ENCODE measurements at regions of chr2 and their contacts with region 1.

Region 1: GRCh38 chr2:158903711-158904443 is 64.6 kb upstream of the TANC1 start:
- DNase-seq: no peak
- H3K4me3 Mint-ChIP-seq: no peak overlapping the region
- H3K27ac Mint-ChIP-seq: no peak overlapping the region
- H3K4me1 Mint-ChIP-seq: no peaks in the 10 kb centered on the region
- H3K27me3 Mint-ChIP-seq: peaks cover 8% of the 10 kb centered on the region

Region 2: DNA sequence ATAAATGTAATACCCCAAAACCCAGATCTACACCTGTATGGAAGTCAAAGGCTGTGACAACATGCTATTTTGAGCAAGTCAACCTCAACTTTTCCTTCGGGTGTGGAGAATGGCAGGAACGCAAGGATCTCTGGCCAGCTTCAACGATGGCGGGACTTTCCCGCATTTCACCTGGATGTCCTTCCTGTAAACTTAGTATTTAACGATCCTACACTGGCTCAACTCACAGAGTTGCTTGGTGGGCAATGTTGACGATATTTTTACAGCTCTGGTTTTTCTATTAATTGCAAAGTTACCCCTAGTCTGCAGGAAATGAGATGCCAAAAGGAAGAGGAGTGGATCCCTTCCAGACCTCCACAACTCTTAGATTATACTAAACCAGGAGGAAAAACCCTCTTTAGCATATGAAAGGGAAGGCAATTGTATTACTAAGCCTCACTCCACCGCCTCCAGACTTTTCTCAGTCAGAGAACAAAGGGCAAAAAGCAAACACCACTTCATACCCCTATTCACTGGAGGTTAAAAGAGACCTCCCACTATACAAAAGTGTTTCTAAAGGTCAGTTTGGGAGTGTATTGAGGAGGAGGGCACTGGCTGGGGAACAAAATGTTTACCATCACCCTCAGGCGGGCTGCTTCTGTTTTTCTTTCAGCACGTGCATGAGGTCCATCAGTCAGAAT is 971.3 kb before region 1 on chr2:
- intact Hi-C with region 1: no loop called
- DNase-seq: no peak
- H3K4me3 Mint-ChIP-seq: no peak overlapping the region
- H3K27ac Mint-ChIP-seq: no peak overlapping the region
- H3K4me1 Mint-ChIP-seq: no peaks in the 10 kb centered on the region
- H3K27me3 Mint-ChIP-seq: no peaks in the 10 kb centered on the region

Region 3: GRCh38 chr2:158828493-158829164 is 75.2 kb before region 1 on chr2:
- intact Hi-C with region 1: no loop called
- DNase-seq: no peak
- H3K4me3 Mint-ChIP-seq: no peak overlapping the region
- H3K27ac Mint-ChIP-seq: no peak overlapping the region
- H3K4me1 Mint-ChIP-seq: no peaks in the 10 kb centered on the region
- H3K27me3 Mint-ChIP-seq: peaks cover 5% of the 10 kb centered on the region

Region 4: GRCh38 chr2:159118115-159118858 is 214.4 kb after region 1 on chr2:
- intact Hi-C with region 1: loop called (anchors 1 kb)
- DNase-seq: peak; percentile 52
- H3K4me3 Mint-ChIP-seq: no peak overlapping the region
- H3K27ac Mint-ChIP-seq: no peak overlapping the region
- H3K4me1 Mint-ChIP-seq: no peaks in the 10 kb centered on the region
- H3K27me3 Mint-ChIP-seq: peaks cover 2% of the 10 kb centered on the region

Region 5: DNA sequence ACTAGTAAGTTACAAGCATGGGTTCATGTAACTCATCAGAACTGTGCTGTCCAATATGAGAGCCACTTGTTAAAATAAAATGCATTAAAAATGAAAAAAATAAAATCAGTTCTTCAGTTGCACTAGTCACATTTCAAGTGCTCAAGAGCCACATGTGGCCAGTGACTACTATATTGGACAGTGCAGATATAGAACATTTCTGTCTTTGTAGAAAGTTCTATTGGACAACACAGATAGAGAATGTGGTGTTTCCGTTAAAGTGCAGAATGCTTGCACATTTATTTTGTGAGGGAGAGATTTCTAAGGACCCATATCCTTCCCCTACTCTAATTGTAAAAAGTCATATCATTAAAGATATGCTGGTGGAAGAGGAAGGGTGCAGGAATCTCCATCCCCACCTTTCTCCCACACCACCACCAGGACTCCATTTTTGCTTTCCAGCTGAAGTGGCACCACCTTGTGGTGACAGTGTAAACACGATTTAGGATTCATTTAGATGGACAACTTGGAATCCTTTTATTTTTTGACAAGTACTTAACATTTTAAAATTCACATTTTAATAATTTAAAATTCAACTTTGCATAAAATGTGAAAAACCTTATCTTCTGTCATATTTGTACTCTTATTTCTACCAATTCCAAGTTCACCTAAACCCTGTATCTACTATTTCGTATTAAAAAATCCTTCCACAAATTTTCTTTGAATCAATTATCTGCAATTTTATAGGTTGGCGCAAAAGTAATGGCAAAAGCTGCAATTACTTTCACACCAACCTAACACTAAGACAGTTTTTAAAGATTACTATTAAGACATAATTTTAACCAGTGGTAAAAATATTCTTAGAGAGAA is 903.5 kb after region 1 on chr2:
- intact Hi-C with region 1: loop called (anchors 1 kb)
- DNase-seq: no peak
- H3K4me3 Mint-ChIP-seq: no peak overlapping the region
- H3K27ac Mint-ChIP-seq: no peak overlapping the region
- H3K4me1 Mint-ChIP-seq: no peaks in the 10 kb centered on the region
- H3K27me3 Mint-ChIP-seq: no peaks in the 10 kb centered on the region

Region 6: GRCh38 chr2:159968279-159968900 is 1064.5 kb after region 1 on chr2:
- intact Hi-C with region 1: loop called (anchors 1 kb)
- DNase-seq: no peak
- H3K4me3 Mint-ChIP-seq: no peak overlapping the region
- H3K27ac Mint-ChIP-seq: no peak overlapping the region
- H3K4me1 Mint-ChIP-seq: no peaks in the 10 kb centered on the region
- H3K27me3 Mint-ChIP-seq: peaks cover 2% of the 10 kb centered on the region

Region 7: GRCh38 chr2:160022162-160022561 is 1118.3 kb after region 1 on chr2:
- intact Hi-C with region 1: loop called (anchors 5 kb)
- DNase-seq: no peak
- H3K4me3 Mint-ChIP-seq: no peak overlapping the region
- H3K27ac Mint-ChIP-seq: no peak overlapping the region
- H3K4me1 Mint-ChIP-seq: no peaks in the 10 kb centered on the region
- H3K27me3 Mint-ChIP-seq: peaks cover 4% of the 10 kb centered on the region

Measured in activated T-helper 1 cell treated with anti-CD3 and anti-CD28 coated beads, Interleukin-12 subunit alpha, Interleukin-12 subunit beta, Interleukin-2, Interleukin-4 antibody, amounts not matched to agents 30 ng/mL and 10 ng/mL and 1 ng/mL, durations not matched to agents 14 hours and 24 hours and 36 hours (primary cell).